HepG2 (cell line): ENCODE measurements at regions of chr6 and their contacts with region 1.

Region 1: GRCh38 chr6:43673444-43674084 is 14.0 kb downstream of the MRPS18A start:
- DNase-seq: no peak
- ATAC-seq: no peak
- H3K4me3 ChIP-seq: no peak overlapping the region
- H3K27ac ChIP-seq: peak overlapping the region; percentile 39
- H3K4me1 ChIP-seq: peaks cover 54% of the 10 kb centered on the region
- H3K27me3 ChIP-seq: no peaks in the 10 kb centered on the region
- CTCF ChIP-seq: no peak
- EP300 ChIP-seq: no peak
- POLR2A ChIP-seq: no peak
- RAD21 ChIP-seq: no peak

Region 2: DNA sequence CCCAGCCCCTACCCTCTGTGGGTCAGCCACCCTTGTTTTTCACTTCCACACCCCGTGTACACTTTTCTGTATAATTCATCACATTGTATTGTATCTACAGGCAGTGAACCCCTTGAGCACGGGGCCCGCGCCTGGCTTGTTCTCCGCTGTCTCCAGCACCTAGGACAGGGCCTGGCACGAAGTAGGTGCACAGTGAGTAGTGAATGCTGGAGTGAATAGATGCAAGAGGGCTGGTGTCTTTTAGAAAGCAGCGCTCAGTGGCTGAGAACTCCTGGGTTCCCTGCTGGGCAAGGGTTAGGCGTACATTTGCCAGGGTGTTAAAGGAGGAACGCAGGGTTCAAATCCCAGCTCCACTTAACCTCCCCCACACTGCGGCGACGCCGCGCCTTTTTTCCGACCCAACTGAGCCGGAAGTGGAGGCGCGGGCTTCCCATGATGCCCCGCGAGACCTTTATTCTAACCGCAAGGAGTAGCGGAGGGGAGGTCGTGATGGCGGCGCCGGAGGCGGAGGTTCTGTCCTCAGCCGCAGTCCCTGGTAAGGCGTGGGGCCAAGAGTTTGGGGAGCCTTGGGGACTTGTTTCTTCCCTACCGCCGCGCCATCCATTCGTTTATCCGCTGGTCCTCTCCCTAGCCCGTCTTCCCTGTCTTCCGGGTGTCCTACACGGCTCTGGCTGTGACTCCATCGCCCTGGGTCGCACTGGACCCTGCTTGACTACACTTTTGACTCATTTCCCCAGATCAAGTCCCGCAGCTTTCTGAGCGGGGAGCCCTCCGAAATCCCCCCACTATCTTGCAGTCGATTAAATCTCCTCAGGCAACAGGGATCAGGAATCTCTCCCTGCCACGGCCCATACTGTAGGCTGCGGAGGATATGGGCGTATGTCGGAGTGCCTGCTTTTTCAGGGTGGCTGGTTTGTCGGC is 37.9 kb before region 1 on chr6 and contains the start of gene MAD2L1BP:
- CTCF ChIA-PET with region 1: no interaction called
- POLR2A ChIA-PET with region 1: interaction called, 55 read pairs
- in situ Hi-C with region 1: no loop called
- intact Hi-C with region 1: loop called (anchors 2 kb)
- DNase-seq: peak; percentile 81
- ATAC-seq: peak; percentile 89
- H3K4me3 ChIP-seq: peak within 1 kb of the TSS; percentile 83 to 98 (median 88)
- H3K27ac ChIP-seq: peak within 1 kb of the TSS; percentile 68
- H3K4me1 ChIP-seq: peaks cover 45% of the 10 kb centered on the region
- H3K27me3 ChIP-seq: no peaks in the 10 kb centered on the region; a peak in 1 of 5 replicates
- CTCF ChIP-seq: peak; percentile 38
- EP300 ChIP-seq: peak in 1 of 2 experiments; percentile 67; a peak in 2 of 4 replicates
- POLR2A ChIP-seq: peak; percentile 97 to 99
- RAD21 ChIP-seq: peak; percentile 28; the same call in 1 of the 2 replicates
- total RNA-seq, gene MAD2L1BP: 54.2 and 69.8 TPM in 2 replicates

Region 3: GRCh38 chr6:43687437-43688347 is 14.1 kb after region 1 on chr6 and contains the start of gene MRPS18A:
- CTCF ChIA-PET with region 1: no interaction called
- POLR2A ChIA-PET with region 1: interaction called, 19 read pairs
- in situ Hi-C with region 1: no loop called
- intact Hi-C with region 1: loop called (anchors 1 kb)
- DNase-seq: peak; percentile 78
- ATAC-seq: peak; percentile 99
- H3K4me3 ChIP-seq: peak within 1 kb of the TSS; percentile 93 to 98 (median 96)
- H3K27ac ChIP-seq: peak within 1 kb of the TSS; percentile 58
- H3K4me1 ChIP-seq: peaks cover 50% of the 10 kb centered on the region
- H3K27me3 ChIP-seq: no peaks in the 10 kb centered on the region; a peak in 1 of 5 replicates
- CTCF ChIP-seq: no peak
- EP300 ChIP-seq: no peak; a peak in 1 of 4 replicates
- POLR2A ChIP-seq: peak; percentile 80 to 82
- RAD21 ChIP-seq: no peak
- total RNA-seq, gene MRPS18A: 89.1 and 100 TPM in 2 replicates

Region 4: DNA sequence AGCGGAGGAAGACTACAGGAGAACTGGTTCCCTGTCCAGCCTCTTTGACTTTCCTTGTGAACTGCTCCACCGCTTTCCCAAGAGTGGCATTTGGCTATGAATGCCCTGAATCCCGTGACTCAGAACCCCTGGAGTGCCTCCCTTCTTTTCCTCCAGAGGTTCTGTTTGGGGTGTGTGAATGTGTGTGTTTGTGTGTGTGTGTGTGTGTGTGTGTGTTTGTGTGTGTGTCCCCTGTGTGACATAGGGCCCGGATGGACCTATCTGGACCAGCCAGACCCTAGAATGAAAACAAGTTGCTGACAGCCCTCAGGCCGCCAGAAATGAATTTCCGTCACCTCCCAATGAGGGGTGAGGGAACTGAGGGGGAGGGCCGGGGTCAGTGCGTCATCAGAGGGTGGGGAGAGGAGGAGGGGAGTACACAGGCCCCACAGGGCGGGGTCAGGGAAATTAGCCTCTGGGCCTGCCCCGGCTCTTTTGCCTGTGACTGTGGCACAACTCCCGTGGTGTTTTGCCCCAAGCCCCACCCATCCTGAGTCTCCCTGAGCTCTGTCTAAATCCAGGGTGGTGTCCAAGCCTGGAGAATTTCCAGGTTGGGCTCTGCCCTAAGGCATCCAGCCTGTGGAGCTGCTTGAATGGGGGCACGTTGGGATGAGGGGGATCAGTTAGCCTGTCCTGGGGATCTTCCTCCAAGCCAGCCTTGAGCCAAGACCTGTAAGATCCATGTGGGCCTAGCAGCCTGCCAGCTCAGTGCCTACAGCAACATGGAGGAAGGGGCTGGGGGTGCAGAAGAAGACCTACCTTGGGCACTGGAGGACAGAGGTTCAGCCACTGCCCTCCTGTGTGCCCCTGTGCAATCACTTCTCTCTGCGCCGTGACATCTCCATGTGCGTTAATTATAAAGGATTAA is 29.2 kb after region 1 on chr6:
- CTCF ChIA-PET with region 1: interaction called, 3 read pairs
- POLR2A ChIA-PET with region 1: interaction called, 10 read pairs
- in situ Hi-C with region 1: no loop called
- intact Hi-C with region 1: loop called (anchors 2 kb)
- DNase-seq: peak; percentile 93
- ATAC-seq: peak; percentile 80
- H3K4me3 ChIP-seq: peak overlapping the region in 2 of 3 experiments; percentile 24 to 54; a peak in 3 of 6 replicates
- H3K27ac ChIP-seq: no peak overlapping the region
- H3K4me1 ChIP-seq: peaks cover 96% of the 10 kb centered on the region
- H3K27me3 ChIP-seq: peaks cover 0 to 19% of the 10 kb centered on the region in 2 experiments; a peak in 3 of 5 replicates
- CTCF ChIP-seq: no peak
- EP300 ChIP-seq: peak in 1 of 2 experiments; percentile 54; a peak in 1 of 4 replicates
- POLR2A ChIP-seq: no peak; a peak in 1 of 4 replicates
- RAD21 ChIP-seq: no peak